ENCODE measurements at regions of chr1 and their contacts with region 1.

Region 1: GRCh38 chr1:51519048-51519864 is at the start of gene EPS15:
- DNase-seq: peak; percentile 55
- H3K4me3 ChIP-seq: peak within 1 kb of the TSS; percentile 81 to 96 (median 84)
- H3K27ac ChIP-seq: peak within 1 kb of the TSS; percentile 52
- H3K4me1 ChIP-seq: peaks cover 24% of the 10 kb centered on the region
- H3K27me3 ChIP-seq: no peaks in the 10 kb centered on the region
- CTCF ChIP-seq: no peak
- POLR2A ChIP-seq: peak; percentile 66
- total RNA-seq, gene EPS15: 44.8 and 52.4 TPM in 2 replicates

Region 2: GRCh38 chr1:51417496-51418383 is 101.5 kb before region 1 on chr1:
- CTCF ChIA-PET with region 1: no interaction called
- POLR2A ChIA-PET with region 1: no interaction called
- dilution Hi-C with region 1: no loop called
- intact Hi-C with region 1: loop called (anchors 5 kb)
- DNase-seq: peak; percentile 41
- H3K4me3 ChIP-seq: no peak overlapping the region
- H3K27ac ChIP-seq: no peak overlapping the region
- H3K4me1 ChIP-seq: peaks cover 2% of the 10 kb centered on the region
- H3K27me3 ChIP-seq: no peaks in the 10 kb centered on the region
- CTCF ChIP-seq: no peak
- POLR2A ChIP-seq: no peak